A549 (cell line): ENCODE measurements at regions of chr19 and their contacts with region 1.

Region 1: GRCh38 chr19:46030812-46031550 is 8.1 kb upstream of the PGLYRP1 start:
- DNase-seq: no peak
- ATAC-seq: no peak
- H3K4me3 ChIP-seq: no peak overlapping the region
- H3K27ac ChIP-seq: peak overlapping the region in 1 of 2 experiments; percentile 39; a peak in 3 of 6 replicates
- H3K4me1 ChIP-seq: no peaks in the 10 kb centered on the region; the same call in 2 of the 3 replicates
- CTCF ChIP-seq: no peak
- EP300 ChIP-seq: no peak
- POLR2A ChIP-seq: no peak
- RAD21 ChIP-seq: no peak

Region 2: GRCh38 chr19:45113616-45114015 is 917.4 kb before region 1 on chr19:
- CTCF ChIA-PET with region 1: no interaction called
- POLR2A ChIA-PET with region 1: no interaction called
- DNase-seq: no peak
- ATAC-seq: no peak
- H3K4me3 ChIP-seq: no peak overlapping the region
- H3K27ac ChIP-seq: peak overlapping the region in 1 of 2 experiments; percentile 32; a peak in 2 of 6 replicates
- H3K4me1 ChIP-seq: peaks cover 15% of the 10 kb centered on the region
- CTCF ChIP-seq: no peak
- EP300 ChIP-seq: no peak
- POLR2A ChIP-seq: no peak
- RAD21 ChIP-seq: no peak

Region 3: GRCh38 chr19:45994989-45995714 is 35.8 kb before region 1 on chr19 and contains the start of gene CCDC61:
- CTCF ChIA-PET with region 1: interaction called, 17 read pairs
- POLR2A ChIA-PET with region 1: no interaction called
- DNase-seq: peak; percentile 99 to 100
- ATAC-seq: peak; percentile 96 to 98
- H3K4me3 ChIP-seq: peak within 1 kb of the TSS; percentile 57
- H3K27ac ChIP-seq: peak within 1 kb of the TSS; percentile 72 to 88
- H3K4me1 ChIP-seq: peaks cover 5% of the 10 kb centered on the region
- CTCF ChIP-seq: no peak
- EP300 ChIP-seq: no peak
- POLR2A ChIP-seq: peak; percentile 93
- RAD21 ChIP-seq: no peak
- polyA plus RNA-seq, gene CCDC61: 3.2 and 4.1 TPM in 2 replicates

Region 4: GRCh38 chr19:46000491-46001246 is 30.3 kb before region 1 on chr19:
- CTCF ChIA-PET with region 1: interaction called, 19 read pairs
- POLR2A ChIA-PET with region 1: no interaction called
- DNase-seq: no peak
- ATAC-seq: peak in 1 of 2 experiments; percentile 18; a peak in 3 of 6 replicates
- H3K4me3 ChIP-seq: no peak overlapping the region
- H3K27ac ChIP-seq: no peak overlapping the region
- H3K4me1 ChIP-seq: peaks cover 5% of the 10 kb centered on the region
- CTCF ChIP-seq: no peak
- EP300 ChIP-seq: no peak
- POLR2A ChIP-seq: no peak
- RAD21 ChIP-seq: no peak

Region 5: GRCh38 chr19:46016426-46017094 is 14.4 kb before region 1 on chr19:
- CTCF ChIA-PET with region 1: interaction called, 146 read pairs
- POLR2A ChIA-PET with region 1: no interaction called
- DNase-seq: peak; percentile 84 to 87
- ATAC-seq: peak; percentile 69 to 85
- H3K4me3 ChIP-seq: peak overlapping the region; percentile 59
- H3K27ac ChIP-seq: peak overlapping the region; percentile 54 to 80; a peak in 5 of 6 replicates
- H3K4me1 ChIP-seq: peaks cover 20% of the 10 kb centered on the region
- CTCF ChIP-seq: peak; percentile 74
- EP300 ChIP-seq: no peak
- POLR2A ChIP-seq: no peak
- RAD21 ChIP-seq: peak; percentile 35 to 61; a peak in 4 of 5 replicates

Region 6: GRCh38 chr19:46068345-46069258 is 37.6 kb after region 1 on chr19:
- CTCF ChIA-PET with region 1: interaction called, 713 read pairs
- POLR2A ChIA-PET with region 1: interaction called, 9 read pairs
- DNase-seq: peak; percentile 68 to 72
- ATAC-seq: peak; percentile 71 to 73
- H3K4me3 ChIP-seq: no peak overlapping the region
- H3K27ac ChIP-seq: peak overlapping the region; percentile 87 to 89
- H3K4me1 ChIP-seq: peaks cover 68% of the 10 kb centered on the region
- CTCF ChIP-seq: no peak
- EP300 ChIP-seq: peak; percentile 89 to 96; a peak in 4 of 5 replicates
- POLR2A ChIP-seq: no peak
- RAD21 ChIP-seq: peak in 1 of 2 experiments; percentile 36; a peak in 1 of 5 replicates

Region 7: GRCh38 chr19:46254776-46255175 is 223.8 kb after region 1 on chr19:
- CTCF ChIA-PET with region 1: interaction called, 227 read pairs
- POLR2A ChIA-PET with region 1: no interaction called
- DNase-seq: no peak
- ATAC-seq: no peak
- H3K4me3 ChIP-seq: no peak overlapping the region
- H3K27ac ChIP-seq: no peak overlapping the region
- H3K4me1 ChIP-seq: peaks cover 21% of the 10 kb centered on the region
- CTCF ChIP-seq: no peak
- EP300 ChIP-seq: no peak
- POLR2A ChIP-seq: no peak
- RAD21 ChIP-seq: no peak